Psoas muscle (tissue), 8 donors: ENCODE measurements at regions of chr3 and their contacts with region 1.

Region 1: DNA sequence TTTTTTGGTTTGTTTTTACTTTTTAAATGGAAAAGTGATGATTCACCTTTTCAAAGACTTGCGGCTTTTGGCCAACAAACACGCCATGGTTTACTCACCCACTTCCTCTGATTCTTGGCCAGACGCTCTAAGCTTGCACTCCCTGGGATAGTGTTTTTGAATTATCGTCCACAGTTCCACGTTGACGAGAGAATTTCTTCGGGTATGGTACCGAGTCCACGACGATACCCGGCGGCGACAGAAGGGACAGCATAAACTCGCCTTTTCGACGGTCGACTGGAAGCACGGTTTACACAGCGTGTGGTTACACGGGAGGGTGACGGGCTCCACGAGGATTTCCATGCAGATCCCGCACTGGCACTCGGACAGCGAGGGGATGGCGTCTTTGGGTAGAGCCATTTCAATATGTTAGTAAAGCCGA is 783 bp downstream of the RNF168 start:
- DNase-seq: peak; percentile 59 to 65
- ATAC-seq: peak; percentile 53 to 74 (median 56)
- H3K4me3 ChIP-seq: peak overlapping the region; percentile 98
- H3K27ac ChIP-seq: peak overlapping the region; percentile 95
- H3K4me1 ChIP-seq: peaks cover 16% of the 10 kb centered on the region
- H3K27me3 ChIP-seq: no peaks in the 10 kb centered on the region
- CTCF ChIP-seq: no peak

Region 2: GRCh38 chr3:196365736-196366135 is 137.0 kb before region 1 on chr3:
- intact Hi-C with region 1: loop called in 1 of 2 experiments (anchors 5 kb)
- DNase-seq: no peak
- ATAC-seq: no peak
- H3K4me3 ChIP-seq: no peak overlapping the region
- H3K27ac ChIP-seq: no peak overlapping the region
- H3K4me1 ChIP-seq: peaks cover 18% of the 10 kb centered on the region
- H3K27me3 ChIP-seq: no peaks in the 10 kb centered on the region
- CTCF ChIP-seq: no peak

Region 3: GRCh38 chr3:196431181-196432136 is 71.3 kb before region 1 on chr3:
- intact Hi-C with region 1: loop called in 1 of 2 experiments (anchors 2 kb)
- DNase-seq: peak; percentile 45 to 59
- ATAC-seq: peak; percentile 28 to 57 (median 42)
- H3K4me3 ChIP-seq: peak overlapping the region; percentile 93
- H3K27ac ChIP-seq: peak overlapping the region; percentile 94
- H3K4me1 ChIP-seq: peaks cover 11% of the 10 kb centered on the region
- H3K27me3 ChIP-seq: no peaks in the 10 kb centered on the region
- CTCF ChIP-seq: no peak

Region 4: GRCh38 chr3:196454935-196455334 is 47.9 kb before region 1 on chr3:
- intact Hi-C with region 1: loop called in 1 of 2 experiments (anchors 5 kb)
- DNase-seq: peak; percentile 37 to 73
- ATAC-seq: peak; percentile 98 to 100 (median 99)
- H3K4me3 ChIP-seq: no peak overlapping the region
- H3K27ac ChIP-seq: peak overlapping the region; percentile 18
- H3K4me1 ChIP-seq: no peaks in the 10 kb centered on the region
- H3K27me3 ChIP-seq: no peaks in the 10 kb centered on the region
- CTCF ChIP-seq: no peak

Region 5: DNA sequence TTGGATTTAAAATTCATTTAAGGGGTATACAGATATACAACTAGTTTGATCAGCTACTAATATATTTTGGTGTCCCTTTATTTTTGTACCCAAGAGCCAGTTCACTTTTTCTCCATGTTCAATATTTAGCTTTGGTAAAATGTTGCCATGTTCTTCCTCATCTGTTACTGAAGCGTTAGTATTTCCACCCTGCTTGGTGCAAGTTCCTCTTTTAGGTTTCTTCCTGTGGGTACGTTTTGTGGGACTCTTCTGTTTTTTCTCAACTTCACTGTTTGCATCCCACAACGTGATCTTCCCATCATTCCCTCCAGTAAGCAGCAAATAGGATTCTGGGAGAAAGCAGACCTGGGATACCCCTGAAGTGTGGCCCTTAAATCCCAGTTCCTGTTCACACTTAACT is 51.4 kb after region 1 on chr3:
- intact Hi-C with region 1: no loop called
- DNase-seq: no peak
- ATAC-seq: no peak
- H3K4me3 ChIP-seq: no peak overlapping the region
- H3K27ac ChIP-seq: peak overlapping the region; percentile 62
- H3K4me1 ChIP-seq: peaks cover 10% of the 10 kb centered on the region
- H3K27me3 ChIP-seq: no peaks in the 10 kb centered on the region
- CTCF ChIP-seq: no peak

Region 6: GRCh38 chr3:196568246-196569002 is 65.6 kb after region 1 on chr3 and contains the starts of genes FBXO45 and WDR53:
- intact Hi-C with region 1: loop called in 1 of 2 experiments (anchors 5 kb)
- DNase-seq: peak; percentile 96 to 98
- ATAC-seq: peak; percentile 99
- H3K4me3 ChIP-seq: peak within 1 kb of the TSS; percentile 89
- H3K27ac ChIP-seq: peak within 1 kb of the TSS; percentile 92
- H3K4me1 ChIP-seq: peaks cover 24% of the 10 kb centered on the region
- H3K27me3 ChIP-seq: no peaks in the 10 kb centered on the region
- CTCF ChIP-seq: no peak
- total RNA-seq, gene FBXO45: 11.0 to 21.1 (median 14.6) TPM
- total RNA-seq, gene WDR53: 4.4 to 15.9 (median 10.4) TPM